ENCODE measurements at regions of chr7 and their contacts with region 1.

Region 1: GRCh38 chr7:30026229-30027064 is at the start of gene FKBP14:
- DNase-seq: peak; percentile 100
- ATAC-seq: peak; percentile 86
- H3K4me3 ChIP-seq: peak within 1 kb of the TSS; percentile 81
- H3K27ac ChIP-seq: peak within 1 kb of the TSS; percentile 87
- H3K4me1 ChIP-seq: no peaks in the 10 kb centered on the region; the same call in 1 of the 2 replicates
- H3K27me3 ChIP-seq: no peaks in the 10 kb centered on the region
- CTCF ChIP-seq: no peak
- POLR2A ChIP-seq: peak; percentile 78
- RAD21 ChIP-seq: no peak
- total RNA-seq, gene FKBP14: 27.1 and 45.0 TPM in 2 replicates

Region 2: GRCh38 chr7:29946428-29947186 is 79.8 kb before region 1 on chr7:
- CTCF ChIA-PET with region 1: no interaction called
- POLR2A ChIA-PET with region 1: no interaction called
- dilution Hi-C with region 1: no loop called
- in situ Hi-C with region 1: no loop called
- intact Hi-C with region 1: loop called (anchors 5 kb)
- DNase-seq: no peak
- ATAC-seq: peak; percentile 14
- H3K4me3 ChIP-seq: no peak overlapping the region
- H3K27ac ChIP-seq: no peak overlapping the region
- H3K4me1 ChIP-seq: peaks cover 4% of the 10 kb centered on the region; the same call in 1 of the 2 replicates
- H3K27me3 ChIP-seq: no peaks in the 10 kb centered on the region
- CTCF ChIP-seq: peak; percentile 33
- POLR2A ChIP-seq: no peak
- RAD21 ChIP-seq: peak; percentile 34

Region 3: GRCh38 chr7:29988424-29989256 is 37.8 kb before region 1 on chr7:
- CTCF ChIA-PET with region 1: no interaction called
- POLR2A ChIA-PET with region 1: no interaction called
- dilution Hi-C with region 1: no loop called
- in situ Hi-C with region 1: no loop called
- intact Hi-C with region 1: loop called (anchors 1 kb)
- DNase-seq: peak; percentile 73
- ATAC-seq: peak; percentile 43
- H3K4me3 ChIP-seq: peak overlapping the region; percentile 99
- H3K27ac ChIP-seq: peak overlapping the region; percentile 97
- H3K4me1 ChIP-seq: peaks cover 10% of the 10 kb centered on the region
- H3K27me3 ChIP-seq: no peaks in the 10 kb centered on the region
- CTCF ChIP-seq: no peak
- POLR2A ChIP-seq: no peak
- RAD21 ChIP-seq: no peak

Region 4: DNA sequence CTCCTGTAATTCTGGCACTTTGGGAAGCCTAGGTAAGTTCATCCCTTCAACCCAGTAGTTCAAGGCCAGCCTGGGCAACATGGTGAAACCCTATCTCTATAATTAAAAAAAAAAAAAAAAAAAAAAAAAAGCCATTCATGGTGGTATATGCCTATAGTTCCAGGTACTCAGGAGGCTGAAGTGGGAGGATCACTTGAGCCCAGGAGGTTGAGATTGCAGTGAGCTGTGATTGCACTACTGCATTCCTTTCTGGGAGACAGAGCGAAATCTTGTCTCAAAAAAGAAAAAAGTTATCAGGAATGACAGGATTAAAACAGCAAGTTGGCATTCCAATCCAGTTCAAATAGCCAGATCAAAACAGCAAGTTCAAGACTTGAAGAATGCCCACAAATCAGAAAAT is 78.8 kb after region 1 on chr7:
- CTCF ChIA-PET with region 1: no interaction called
- POLR2A ChIA-PET with region 1: no interaction called
- dilution Hi-C with region 1: no loop called
- in situ Hi-C with region 1: no loop called
- intact Hi-C with region 1: no loop called
- DNase-seq: no peak
- ATAC-seq: no peak
- H3K4me3 ChIP-seq: no peak overlapping the region
- H3K27ac ChIP-seq: no peak overlapping the region
- H3K4me1 ChIP-seq: no peaks in the 10 kb centered on the region
- H3K27me3 ChIP-seq: no peaks in the 10 kb centered on the region
- CTCF ChIP-seq: no peak
- POLR2A ChIP-seq: no peak
- RAD21 ChIP-seq: no peak